Activated CD8-positive, alpha-beta T cell treated with anti-CD3 and anti-CD28 coated beads for 36 hours (primary cell): ENCODE measurements at regions of chr20 and their contacts with region 1.

Region 1: DNA sequence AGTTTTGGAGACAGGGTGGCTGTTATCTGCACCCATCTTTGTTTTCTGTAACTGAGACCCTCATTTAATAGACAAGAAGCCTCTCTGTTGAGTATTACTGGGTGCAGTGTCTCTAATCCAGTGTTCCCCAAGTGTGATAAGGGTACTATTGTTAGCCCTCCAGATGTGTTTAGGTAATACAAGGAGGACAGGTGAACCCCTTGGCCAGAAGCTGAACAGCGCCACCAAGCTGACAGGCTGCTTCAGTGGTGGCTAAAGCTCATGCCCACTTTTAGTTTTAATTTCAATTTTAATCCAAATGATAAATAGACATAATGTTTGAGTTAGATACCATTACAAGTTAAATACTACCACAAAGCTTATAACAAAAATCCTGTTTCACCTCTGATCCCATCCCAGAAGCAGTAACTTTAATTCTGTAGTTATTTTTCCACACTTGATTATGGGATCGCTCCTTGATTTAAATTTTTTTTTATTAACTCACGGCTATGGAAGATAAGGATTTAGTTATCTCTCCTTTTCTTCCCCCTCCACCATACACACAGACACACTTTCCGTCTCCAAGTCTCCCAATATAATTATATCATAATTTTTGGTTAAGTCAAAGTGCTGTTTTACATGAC is 8.4 kb upstream of the STK35 start:
- DNase-seq: peak; percentile 63
- ATAC-seq: peak; percentile 56
- H3K4me3 Mint-ChIP-seq: no peak overlapping the region
- H3K27ac Mint-ChIP-seq: no peak overlapping the region
- H3K4me1 Mint-ChIP-seq: peaks cover 2% of the 10 kb centered on the region
- H3K27me3 Mint-ChIP-seq: peaks cover 28% of the 10 kb centered on the region
- CTCF ChIP-seq: peak; percentile 69

Region 2: GRCh38 chr20:1802385-1803060 is 290.7 kb before region 1 on chr20:
- CTCF ChIA-PET with region 1: interaction called, 4 read pairs
- POLR2A ChIA-PET with region 1: no interaction called
- intact Hi-C with region 1: loop called (anchors 10 kb)
- DNase-seq: peak; percentile 66
- ATAC-seq: peak; percentile 87
- H3K4me3 Mint-ChIP-seq: peak overlapping the region; percentile 53
- H3K27ac Mint-ChIP-seq: no peak overlapping the region
- H3K4me1 Mint-ChIP-seq: peaks cover 6% of the 10 kb centered on the region
- H3K27me3 Mint-ChIP-seq: peaks cover 50% of the 10 kb centered on the region
- CTCF ChIP-seq: peak; percentile 68

Region 3: DNA sequence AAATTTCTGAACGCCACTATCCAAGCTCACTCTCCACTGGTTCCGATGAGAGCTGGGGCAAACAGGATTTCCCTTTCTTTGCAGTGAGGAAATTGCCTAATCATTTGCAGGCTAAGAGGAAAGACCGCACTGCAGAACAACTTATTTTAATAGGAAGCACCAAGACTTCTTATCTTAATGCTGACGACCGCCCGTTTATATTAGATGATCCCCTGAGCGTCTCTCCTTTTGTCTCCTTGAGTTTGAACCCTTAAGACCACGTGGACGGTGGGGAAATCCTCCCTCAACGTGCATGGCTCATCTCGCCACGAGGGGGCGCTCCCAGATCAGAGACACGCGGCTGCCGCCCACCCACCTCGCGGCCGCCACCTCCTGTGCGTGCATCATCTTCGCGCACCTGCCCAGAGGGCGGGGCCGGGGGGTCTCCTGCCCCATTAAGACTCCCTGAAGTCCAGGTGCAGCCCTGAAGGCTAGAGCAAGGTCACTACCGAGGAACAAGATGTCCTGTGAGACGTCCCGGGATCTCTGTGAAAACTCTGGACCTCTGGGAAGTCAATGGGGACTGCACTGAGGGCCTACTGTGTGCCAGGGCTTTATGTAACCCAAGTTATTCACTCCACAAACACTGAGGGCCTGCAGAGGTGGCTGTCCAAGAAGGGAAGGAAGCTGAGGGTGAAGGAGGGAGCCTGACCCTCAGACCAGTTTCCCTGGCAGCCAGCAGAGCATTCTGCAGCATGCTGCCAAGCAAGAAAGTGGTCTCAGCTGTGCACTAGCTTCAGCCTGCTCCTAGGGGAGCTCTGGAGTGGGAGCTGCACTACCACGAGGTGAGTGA is 127.5 kb before region 1 on chr20:
- CTCF ChIA-PET with region 1: interaction called, 15 read pairs
- POLR2A ChIA-PET with region 1: no interaction called
- intact Hi-C with region 1: no loop called
- DNase-seq: peak; percentile 91
- ATAC-seq: peak; percentile 92
- H3K4me3 Mint-ChIP-seq: peak overlapping the region; percentile 40
- H3K27ac Mint-ChIP-seq: peak overlapping the region; percentile 35
- H3K4me1 Mint-ChIP-seq: peaks cover 17% of the 10 kb centered on the region
- H3K27me3 Mint-ChIP-seq: peaks cover 32% of the 10 kb centered on the region
- CTCF ChIP-seq: peak; percentile 95